ENCODE measurements at regions of chr3 and their contacts with region 1.

Region 1: DNA sequence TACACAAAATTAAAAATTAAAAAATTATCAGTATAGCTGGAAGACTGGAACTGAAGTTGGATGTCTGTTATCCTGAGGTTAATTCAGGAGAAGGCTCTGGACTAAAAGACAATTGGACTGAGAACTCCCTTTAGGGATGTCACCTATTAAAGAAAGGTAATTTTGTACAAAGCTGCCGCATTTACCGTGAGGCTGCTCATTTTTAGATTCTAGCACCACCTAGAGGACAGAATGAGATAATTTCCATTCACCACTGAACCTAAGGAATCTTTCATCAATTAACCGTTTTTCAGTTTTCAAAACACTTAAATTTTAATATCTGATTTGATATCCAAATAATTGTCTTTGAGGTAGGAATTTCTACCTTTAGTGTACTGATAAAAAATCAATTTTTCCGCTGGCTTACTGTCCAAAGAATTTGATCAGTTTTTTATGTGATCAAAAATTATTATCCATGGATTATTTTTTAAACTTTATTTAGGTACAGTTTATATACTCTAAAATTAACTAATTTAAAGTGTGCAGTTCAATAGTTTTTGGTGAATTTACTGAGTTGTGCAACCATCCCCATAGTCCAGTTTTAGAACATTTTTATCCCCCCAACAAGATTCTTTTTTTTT is 106.7 kb upstream of the TNIK start:
- DNase-seq: no peak
- ATAC-seq: no peak

Region 2: DNA sequence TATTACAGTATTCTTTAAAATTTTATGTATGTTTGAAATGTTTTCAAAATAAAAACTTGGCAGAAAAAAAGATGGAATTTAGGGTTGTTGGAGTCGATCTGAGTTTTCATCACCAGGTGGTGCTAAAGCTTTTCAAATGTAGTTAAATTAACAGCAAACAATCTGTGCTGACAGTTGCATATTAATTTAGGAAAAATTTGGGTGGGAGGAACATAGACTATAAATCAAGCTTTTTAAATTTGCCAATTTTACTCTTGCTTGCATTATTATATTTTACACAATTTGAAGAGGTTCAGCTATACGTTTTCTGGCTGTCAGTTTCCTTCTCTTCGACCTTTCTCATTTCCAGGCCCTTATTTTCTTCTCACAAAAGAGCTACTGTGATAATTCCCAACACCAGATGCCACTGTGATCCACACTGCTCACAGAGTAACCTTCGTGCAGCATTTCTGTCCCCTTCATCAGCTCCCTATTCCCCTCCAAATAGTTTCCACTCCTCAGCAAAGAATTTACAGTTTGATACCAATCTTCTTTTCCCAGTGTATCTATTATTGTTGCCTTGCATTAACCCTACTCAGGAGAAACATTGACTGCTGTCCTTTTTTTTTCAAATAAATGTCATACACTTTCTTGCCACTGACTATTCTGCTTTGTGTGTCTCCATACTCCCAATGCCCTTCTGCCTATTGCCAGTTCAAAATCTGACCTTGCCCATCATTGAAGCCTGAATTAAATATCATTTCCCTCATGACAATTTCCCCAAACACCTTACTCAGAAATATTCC is 605.1 kb before region 1 on chr3:
- intact Hi-C with region 1: loop called (anchors 5 kb)
- DNase-seq: no peak
- ATAC-seq: no peak

Region 3: DNA sequence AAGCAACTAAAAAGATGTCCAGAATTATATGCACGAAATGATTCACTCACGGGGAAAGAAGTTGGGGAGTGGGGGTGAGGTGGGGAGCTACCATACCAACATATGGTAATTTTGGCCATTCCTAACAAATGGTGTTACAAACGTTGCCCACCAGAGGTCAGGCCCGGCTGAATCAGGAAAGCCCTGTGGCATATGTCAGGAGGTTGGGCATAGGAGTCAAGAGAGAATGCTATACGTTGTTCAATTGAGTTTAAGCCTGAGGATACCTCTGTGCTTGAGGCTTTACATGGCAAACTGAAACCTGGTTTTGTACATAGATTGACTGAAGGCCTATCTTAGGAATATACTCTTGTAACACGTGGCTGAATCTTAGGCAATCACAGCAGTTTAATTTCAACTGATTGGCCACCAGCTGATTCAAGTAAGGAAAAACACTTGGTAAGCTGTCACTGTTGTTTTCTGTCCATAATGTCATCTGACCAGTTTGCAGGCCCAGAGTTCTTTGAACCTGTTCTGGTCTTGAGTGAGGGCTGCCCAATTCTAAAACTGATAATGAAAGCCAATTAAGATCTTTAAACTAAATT is 517.0 kb before region 1 on chr3:
- intact Hi-C with region 1: loop called (anchors 5 kb)
- DNase-seq: no peak
- ATAC-seq: peak; percentile 71

Region 4: GRCh38 chr3:171157286-171157685 is 409.6 kb before region 1 on chr3:
- intact Hi-C with region 1: loop called (anchors 5 kb)
- DNase-seq: peak; percentile 75
- ATAC-seq: peak; percentile 41

Region 5: DNA sequence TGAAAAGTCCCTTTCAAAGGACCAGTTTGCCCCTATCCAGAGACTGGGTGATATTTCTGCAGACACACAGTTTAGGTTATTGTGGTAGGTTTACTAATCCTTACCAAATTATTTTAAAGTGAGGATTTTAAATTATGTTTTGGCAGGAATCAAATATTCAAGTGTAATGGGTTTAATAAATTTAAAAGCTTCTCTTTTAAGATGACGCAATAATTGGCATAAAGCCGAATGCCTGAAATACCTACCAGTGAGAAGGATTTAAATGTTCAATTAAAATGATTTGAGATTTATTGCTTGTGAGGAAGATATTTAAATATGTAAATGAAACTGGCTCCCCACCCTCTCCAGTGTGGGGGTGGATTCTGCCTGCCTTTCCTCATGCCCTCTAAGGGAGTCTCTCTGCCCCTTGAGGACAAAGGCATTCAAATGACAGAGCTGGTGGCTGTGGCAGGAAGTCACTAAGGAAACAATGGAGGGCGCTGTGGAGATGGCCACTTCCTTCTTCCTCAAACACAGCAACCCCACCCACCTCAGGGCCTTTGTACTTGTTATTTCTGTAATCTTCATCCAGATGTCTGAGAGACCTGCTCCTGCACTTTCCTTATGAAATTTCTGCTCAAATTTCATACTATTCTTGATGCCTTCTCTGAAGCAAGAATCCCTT is 238.4 kb before region 1 on chr3:
- intact Hi-C with region 1: loop called (anchors 10 kb)
- DNase-seq: no peak
- ATAC-seq: peak; percentile 40

Region 6: GRCh38 chr3:171459942-171460724 is 106.8 kb before region 1 on chr3 and contains the start of gene TNIK:
- intact Hi-C with region 1: loop called (anchors 2 kb)
- DNase-seq: peak; percentile 94
- ATAC-seq: peak; percentile 97
- total RNA-seq, gene TNIK: 29.1 TPM

Region 7: DNA sequence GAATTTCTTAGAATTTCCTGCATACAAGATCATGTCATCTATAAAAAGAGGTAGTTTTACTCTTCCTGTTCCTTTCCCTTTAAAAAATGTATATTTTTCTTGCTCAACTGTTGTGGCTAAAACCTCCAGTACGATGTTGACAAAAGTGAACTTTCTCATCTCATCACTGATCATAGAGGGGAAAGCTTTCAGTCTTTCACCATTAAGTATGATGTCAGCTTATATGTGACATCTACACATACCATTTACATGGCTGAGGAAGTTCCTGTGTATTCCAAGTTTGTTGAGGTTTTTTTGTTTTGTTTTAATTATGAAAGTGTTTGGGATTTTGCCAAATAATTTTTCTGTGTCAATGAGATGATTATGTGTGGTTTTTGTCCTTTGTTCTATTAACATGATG is 69.8 kb after region 1 on chr3:
- intact Hi-C with region 1: no loop called
- DNase-seq: no peak
- ATAC-seq: no peak